Endothelial cell of umbilical vein (primary cell): ENCODE measurements at regions of chr12 and their contacts with region 1.

Region 1: DNA sequence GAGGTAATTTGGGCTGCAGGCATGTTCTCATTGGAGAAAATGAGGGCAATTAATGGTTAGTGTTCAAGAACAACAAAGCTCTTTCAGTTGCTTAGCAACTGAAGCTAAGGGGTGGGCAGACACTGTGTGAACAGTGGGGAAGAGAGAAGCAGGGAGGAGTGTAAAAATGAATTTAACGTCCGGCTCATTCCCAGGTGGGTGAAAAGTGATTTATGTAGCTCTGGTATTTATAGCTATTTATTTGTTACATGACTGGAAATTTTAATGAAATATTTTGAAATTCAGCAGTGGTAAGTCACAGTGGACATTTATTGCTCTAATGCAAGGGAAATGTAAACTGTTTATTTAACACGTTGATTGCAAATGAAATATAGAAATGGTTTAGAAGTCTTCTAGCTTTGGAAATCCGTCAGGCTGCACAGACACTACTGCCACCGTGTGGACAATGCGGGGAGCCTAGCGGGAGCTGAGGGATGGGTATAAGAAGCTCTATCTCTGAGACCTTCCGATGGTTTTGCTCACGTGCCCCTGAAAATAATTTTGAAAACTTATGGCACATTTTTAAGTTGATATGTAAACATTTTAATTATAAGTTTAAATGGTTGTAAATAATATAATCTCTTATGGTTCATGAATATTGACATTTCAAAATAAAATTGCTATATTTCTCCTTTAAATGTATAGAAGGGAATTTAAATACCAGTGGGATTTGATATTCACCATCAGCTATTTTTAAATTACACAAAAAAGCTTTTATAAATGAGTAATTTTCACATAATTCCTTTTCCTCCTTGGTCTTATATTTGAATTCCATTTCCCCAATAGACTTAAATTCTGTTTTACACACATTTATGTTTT is 54.4 kb downstream of the E2F7 start:
- DNase-seq: peak; percentile 80
- H3K4me3 ChIP-seq: no peak overlapping the region
- H3K27ac ChIP-seq: no peak overlapping the region
- H3K4me1 ChIP-seq: no peaks in the 10 kb centered on the region
- H3K27me3 ChIP-seq: peaks cover 0 to 7% of the 10 kb centered on the region in 2 experiments
- CTCF ChIP-seq: peak; percentile 89 to 95
- POLR2A ChIP-seq: no peak

Region 2: DNA sequence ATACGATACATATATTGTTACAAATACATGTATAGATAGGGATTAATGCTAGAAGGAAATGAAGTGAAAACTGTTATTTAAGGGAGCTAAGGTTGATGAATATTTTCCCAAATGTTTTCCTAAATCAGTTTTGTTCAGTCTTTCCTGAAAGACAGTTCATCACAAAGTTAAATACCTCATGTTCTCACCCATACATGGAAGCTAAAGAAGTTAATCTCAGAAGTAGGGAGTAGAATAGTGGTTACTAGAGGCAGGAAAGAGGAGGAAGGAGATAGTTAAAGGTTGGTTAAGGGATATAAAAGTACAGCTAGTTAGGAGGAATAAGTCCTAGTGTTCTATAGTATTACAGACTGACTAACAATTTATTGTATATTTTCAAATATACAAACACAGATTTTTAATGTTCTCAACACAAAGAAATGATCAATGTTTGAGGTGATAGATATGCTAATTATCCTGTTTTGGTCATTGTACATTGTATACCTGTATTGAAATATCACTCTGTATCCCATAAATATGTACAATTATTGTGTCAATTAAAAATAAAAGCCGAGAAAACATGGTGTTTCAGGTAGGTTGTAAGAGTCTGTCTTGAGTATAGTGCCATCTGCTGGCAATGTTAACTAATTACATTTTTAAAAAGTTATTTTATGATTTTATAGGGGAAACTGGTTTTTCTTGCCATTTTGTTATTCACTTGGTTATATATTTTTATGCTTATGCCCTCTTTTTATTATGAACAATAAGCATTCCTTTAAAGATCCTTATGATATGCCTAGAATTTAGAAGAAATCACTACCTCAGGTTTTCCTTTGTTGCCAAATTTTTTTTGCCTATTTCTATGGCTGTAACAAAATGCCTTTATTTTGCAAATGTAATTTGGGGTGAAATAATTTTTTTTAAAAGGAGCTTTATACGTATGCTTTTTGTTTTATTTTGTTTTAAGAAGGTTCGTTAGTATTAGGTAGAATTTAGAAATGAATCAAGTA is 220.1 kb before region 1 on chr12:
- CTCF ChIA-PET with region 1: interaction called, 9 read pairs
- POLR2A ChIA-PET with region 1: no interaction called
- dilution Hi-C with region 1: no loop called
- intact Hi-C with region 1: loop called (anchors 1 kb)
- DNase-seq: peak; percentile 46
- H3K4me3 ChIP-seq: no peak overlapping the region
- H3K27ac ChIP-seq: no peak overlapping the region
- H3K4me1 ChIP-seq: no peaks in the 10 kb centered on the region
- H3K27me3 ChIP-seq: no peaks in the 10 kb centered on the region
- CTCF ChIP-seq: peak; percentile 16 to 17
- POLR2A ChIP-seq: no peak

Region 3: DNA sequence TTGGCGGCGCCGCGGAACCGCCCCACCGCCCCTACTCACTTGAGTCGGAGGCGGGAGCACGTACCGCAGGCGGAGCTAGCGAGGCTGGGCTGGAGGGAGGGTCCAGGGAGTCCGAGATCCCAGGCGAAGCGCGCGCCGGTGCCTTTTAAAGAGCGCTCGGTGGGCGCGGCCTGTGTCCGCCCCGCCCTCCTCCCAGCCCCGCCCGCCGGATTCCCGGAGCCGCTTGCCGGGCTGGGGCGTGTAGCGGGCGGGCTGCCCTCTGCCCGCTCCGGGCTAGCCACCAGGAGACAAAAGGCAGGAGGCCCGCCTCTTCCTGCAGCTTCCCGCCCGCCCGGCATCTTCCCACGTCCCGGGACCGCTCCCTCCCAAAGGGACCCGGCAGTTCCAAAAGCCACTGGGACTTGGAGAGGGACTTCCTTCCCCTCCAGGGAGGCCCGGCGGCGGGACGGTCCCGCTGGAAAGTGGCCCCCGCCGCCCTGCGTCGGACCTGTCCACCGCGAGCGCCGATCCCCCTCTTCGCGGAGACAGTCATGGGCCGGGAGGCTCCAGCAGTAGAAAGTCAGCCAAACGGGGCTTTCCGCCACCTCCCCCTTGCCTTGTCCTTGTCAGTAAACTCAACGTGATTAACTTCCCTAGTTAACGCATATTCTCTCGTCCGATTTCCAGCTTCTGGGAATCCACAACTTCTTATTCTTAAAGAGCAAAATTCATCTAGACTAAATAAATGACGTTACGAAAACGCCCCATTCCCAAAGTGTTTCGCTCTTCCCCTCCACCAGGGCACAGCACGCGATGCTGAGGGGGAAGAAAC is 131.8 kb before region 1 on chr12 and contains the start of gene CSRP2:
- CTCF ChIA-PET with region 1: interaction called, 19 read pairs
- POLR2A ChIA-PET with region 1: no interaction called
- dilution Hi-C with region 1: no loop called
- intact Hi-C with region 1: loop called (anchors 2 kb)
- DNase-seq: peak; percentile 86
- H3K4me3 ChIP-seq: peak within 1 kb of the TSS; percentile 83 to 92 (median 89)
- H3K27ac ChIP-seq: peak within 1 kb of the TSS; percentile 81
- H3K4me1 ChIP-seq: peaks cover 9% of the 10 kb centered on the region
- H3K27me3 ChIP-seq: no peaks in the 10 kb centered on the region
- CTCF ChIP-seq: peak in 1 of 2 donors; percentile 16
- POLR2A ChIP-seq: peak; percentile 66
- total RNA-seq, gene CSRP2: 12.7 and 13.4 TPM in 2 replicates

Region 4: DNA sequence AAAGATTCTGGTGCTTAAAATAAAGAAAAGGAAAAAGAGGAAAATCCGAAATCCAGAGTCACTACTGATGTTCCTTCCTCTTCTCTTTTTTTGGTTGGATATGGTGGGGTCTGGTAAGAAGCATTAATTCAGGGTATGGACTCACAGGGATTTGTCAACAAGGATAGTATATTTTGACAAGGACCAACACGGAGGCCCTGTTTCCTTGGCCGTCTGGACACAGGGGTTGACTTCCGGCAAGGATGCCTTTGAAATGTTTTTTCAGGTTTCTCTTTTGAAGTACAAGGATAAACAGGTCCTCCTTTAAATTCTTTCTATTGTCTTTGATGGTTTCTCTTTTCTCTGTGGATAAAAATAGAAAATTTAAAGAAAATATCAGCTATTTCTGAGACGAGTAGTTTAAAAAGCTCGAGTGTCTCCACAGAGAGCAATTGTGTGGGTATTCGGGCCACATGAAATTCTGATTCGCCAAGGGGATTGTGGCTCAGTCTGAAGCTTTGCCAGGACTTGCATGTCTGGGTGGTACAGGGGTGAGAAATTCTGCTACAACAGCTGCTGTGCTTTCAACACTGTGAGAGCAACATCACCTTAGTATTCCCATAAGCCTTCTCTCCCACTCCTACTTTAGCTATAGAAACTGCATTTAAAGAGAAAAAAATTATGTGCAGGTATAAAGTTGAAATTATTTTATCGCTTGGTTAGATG is 43.6 kb before region 1 on chr12:
- CTCF ChIA-PET with region 1: interaction called, 12 read pairs
- POLR2A ChIA-PET with region 1: no interaction called
- dilution Hi-C with region 1: no loop called
- intact Hi-C with region 1: no loop called
- DNase-seq: no peak
- H3K4me3 ChIP-seq: no peak overlapping the region
- H3K27ac ChIP-seq: no peak overlapping the region
- H3K4me1 ChIP-seq: no peaks in the 10 kb centered on the region
- H3K27me3 ChIP-seq: peaks cover 5 to 7% of the 10 kb centered on the region in 2 experiments
- CTCF ChIP-seq: no peak
- POLR2A ChIP-seq: no peak

Region 5: DNA sequence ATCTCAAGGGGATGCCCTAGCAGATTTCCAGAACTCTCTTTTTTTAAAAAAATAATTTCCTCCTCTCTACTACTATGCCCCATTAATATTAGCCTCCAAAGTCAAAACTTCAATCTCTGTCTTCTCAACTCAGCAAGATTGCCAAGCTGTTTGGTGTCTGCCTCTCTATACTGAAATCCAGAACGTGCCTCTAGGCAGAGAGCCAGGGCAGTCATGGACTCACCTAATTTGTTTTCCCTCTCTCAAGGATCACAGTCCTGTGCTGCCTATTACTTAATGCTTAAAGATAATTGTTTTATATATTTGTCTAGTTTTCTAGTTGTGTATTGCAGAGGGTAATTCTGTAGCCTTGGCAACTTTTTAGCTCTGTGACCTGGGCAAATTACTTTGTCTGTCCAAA is 20.2 kb before region 1 on chr12:
- CTCF ChIA-PET with region 1: interaction called, 13 read pairs
- POLR2A ChIA-PET with region 1: no interaction called
- dilution Hi-C with region 1: no loop called
- intact Hi-C with region 1: no loop called
- DNase-seq: no peak
- H3K4me3 ChIP-seq: no peak overlapping the region
- H3K27ac ChIP-seq: no peak overlapping the region
- H3K4me1 ChIP-seq: no peaks in the 10 kb centered on the region
- H3K27me3 ChIP-seq: peaks cover 0 to 5% of the 10 kb centered on the region in 2 experiments
- CTCF ChIP-seq: no peak
- POLR2A ChIP-seq: no peak

Region 6: GRCh38 chr12:77065361-77066204 is 54.7 kb after region 1 on chr12 and contains the start of gene E2F7:
- CTCF ChIA-PET with region 1: no interaction called
- POLR2A ChIA-PET with region 1: no interaction called
- dilution Hi-C with region 1: no loop called
- intact Hi-C with region 1: no loop called
- DNase-seq: peak; percentile 91
- H3K4me3 ChIP-seq: peak within 1 kb of the TSS; percentile 64 to 90 (median 83)
- H3K27ac ChIP-seq: peak within 1 kb of the TSS; percentile 35
- H3K4me1 ChIP-seq: peaks cover 30% of the 10 kb centered on the region
- H3K27me3 ChIP-seq: no peaks in the 10 kb centered on the region
- CTCF ChIP-seq: no peak
- POLR2A ChIP-seq: peak; percentile 70
- total RNA-seq, gene E2F7: 19.8 and 24.4 TPM in 2 replicates

Region 7: GRCh38 chr12:77685112-77685511 is 674.2 kb after region 1 on chr12:
- CTCF ChIA-PET with region 1: interaction called, 29 read pairs
- POLR2A ChIA-PET with region 1: no interaction called
- dilution Hi-C with region 1: no loop called
- intact Hi-C with region 1: no loop called
- DNase-seq: peak; percentile 80
- H3K4me3 ChIP-seq: no peak overlapping the region
- H3K27ac ChIP-seq: no peak overlapping the region
- H3K4me1 ChIP-seq: peaks cover 2% of the 10 kb centered on the region
- H3K27me3 ChIP-seq: peaks cover 0 to under 1% of the 10 kb centered on the region in 2 experiments
- CTCF ChIP-seq: peak; percentile 54 to 57
- POLR2A ChIP-seq: no peak